PC-3 (cell line): ENCODE measurements at regions of chr7 and their contacts with region 1.

Region 1: DNA sequence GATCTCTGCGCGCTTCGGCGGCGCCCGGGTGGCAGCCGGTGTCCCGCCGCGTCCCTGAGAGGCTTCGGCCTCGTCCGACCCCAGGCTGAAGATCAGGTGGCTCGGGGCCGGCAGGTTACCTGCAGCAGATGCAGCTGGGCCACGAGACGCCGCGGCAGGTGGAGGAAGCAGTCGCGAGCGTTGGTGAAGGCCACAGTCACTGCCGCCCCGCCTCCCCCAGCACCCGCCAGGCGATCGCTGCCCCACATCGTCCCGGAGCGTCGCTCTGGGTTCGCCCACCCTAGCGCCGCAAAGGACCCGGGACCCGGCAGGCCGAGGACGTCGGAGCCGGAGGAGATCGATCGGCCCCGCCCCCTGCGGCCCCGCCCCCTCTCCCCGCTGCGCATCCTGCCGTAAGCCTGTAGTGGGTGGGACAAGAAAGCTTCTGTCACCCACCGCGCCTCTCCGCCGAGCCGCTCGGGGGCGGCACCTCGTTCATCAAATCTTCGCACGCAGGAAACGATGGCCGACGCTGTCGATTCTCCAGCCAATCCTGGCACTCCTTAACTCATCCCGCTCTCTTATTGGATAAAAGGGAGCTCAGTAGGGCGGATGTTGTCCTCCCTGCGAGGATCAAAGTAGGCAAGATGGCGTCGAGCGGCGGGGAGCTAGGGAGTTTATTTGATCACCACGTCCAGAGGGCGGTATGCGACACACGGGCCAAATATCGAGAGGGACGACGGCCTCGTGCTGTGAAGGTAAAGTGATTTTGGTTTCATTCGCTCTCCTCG is at the starts of genes PEX1 and RBM48:
- DNase-seq: peak; percentile 98
- ATAC-seq: peak; percentile 94
- H3K4me3 ChIP-seq: peak within 1 kb of the TSS; percentile 84
- H3K27ac ChIP-seq: peak within 1 kb of the TSS; percentile 12
- H3K4me1 ChIP-seq: peaks cover 17% of the 10 kb centered on the region
- H3K27me3 ChIP-seq: no peaks in the 10 kb centered on the region
- CTCF ChIP-seq: peak; percentile 65
- total RNA-seq, gene PEX1: 6.2 and 8.5 TPM in 2 replicates
- total RNA-seq, gene RBM48: 5.7 and 8.2 TPM in 2 replicates

Region 2: GRCh38 chr7:92489634-92490033 is 38.7 kb before region 1 on chr7:
- CTCF ChIA-PET with region 1: no interaction called
- POLR2A ChIA-PET with region 1: no interaction called
- intact Hi-C with region 1: no loop called
- DNase-seq: no peak
- ATAC-seq: no peak
- H3K4me3 ChIP-seq: no peak overlapping the region
- H3K27ac ChIP-seq: no peak overlapping the region
- H3K4me1 ChIP-seq: peaks cover 5% of the 10 kb centered on the region
- H3K27me3 ChIP-seq: no peaks in the 10 kb centered on the region
- CTCF ChIP-seq: no peak

Region 3: GRCh38 chr7:92590711-92591310 is 62.4 kb after region 1 on chr7:
- CTCF ChIA-PET with region 1: interaction called, 5 read pairs
- POLR2A ChIA-PET with region 1: interaction called, 26 read pairs
- intact Hi-C with region 1: loop called (anchors 5 kb)
- DNase-seq: no peak
- ATAC-seq: no peak
- H3K4me3 ChIP-seq: peak overlapping the region; percentile 98
- H3K27ac ChIP-seq: no peak overlapping the region
- H3K4me1 ChIP-seq: peaks cover 31% of the 10 kb centered on the region
- H3K27me3 ChIP-seq: no peaks in the 10 kb centered on the region
- CTCF ChIP-seq: no peak

Region 4: GRCh38 chr7:92598310-92598981 is 70.1 kb after region 1 on chr7:
- CTCF ChIA-PET with region 1: interaction called, 5 read pairs
- POLR2A ChIA-PET with region 1: interaction called, 22 read pairs
- intact Hi-C with region 1: loop called (anchors 5 kb)
- DNase-seq: no peak
- ATAC-seq: no peak
- H3K4me3 ChIP-seq: no peak overlapping the region
- H3K27ac ChIP-seq: no peak overlapping the region
- H3K4me1 ChIP-seq: peaks cover 12% of the 10 kb centered on the region
- H3K27me3 ChIP-seq: no peaks in the 10 kb centered on the region
- CTCF ChIP-seq: no peak

Region 5: GRCh38 chr7:92633211-92633906 is 105.0 kb after region 1 on chr7:
- CTCF ChIA-PET with region 1: interaction called, 3 read pairs
- POLR2A ChIA-PET with region 1: interaction called, 11 read pairs
- intact Hi-C with region 1: no loop called
- DNase-seq: peak; percentile 91
- ATAC-seq: peak; percentile 80
- H3K4me3 ChIP-seq: peak overlapping the region; percentile 38; the same call in 1 of the 2 replicates
- H3K27ac ChIP-seq: peak overlapping the region; percentile 73
- H3K4me1 ChIP-seq: peaks cover 51% of the 10 kb centered on the region
- H3K27me3 ChIP-seq: no peaks in the 10 kb centered on the region
- CTCF ChIP-seq: no peak